Dorsolateral prefrontal cortex (tissue), 120 donors: ENCODE measurements at regions of chr15 and their contacts with region 1.

Region 1: GRCh38 chr15:75758071-75758872 is 45.6 kb upstream of the CSPG4 start:
- DNase-seq: peak; percentile 76 to 92 (median 88)
- H3K4me3 ChIP-seq: peak overlapping the region; percentile 48 to 88 (median 70)
- H3K27ac ChIP-seq: peak overlapping the region in 56 of 59 donors; percentile 5 to 92 (median 78)
- H3K27me3 ChIP-seq: no peaks in the 10 kb centered on the region
- CTCF ChIP-seq: peak in 40 of 56 donors; percentile 4 to 61 (median 42)

Region 2: DNA sequence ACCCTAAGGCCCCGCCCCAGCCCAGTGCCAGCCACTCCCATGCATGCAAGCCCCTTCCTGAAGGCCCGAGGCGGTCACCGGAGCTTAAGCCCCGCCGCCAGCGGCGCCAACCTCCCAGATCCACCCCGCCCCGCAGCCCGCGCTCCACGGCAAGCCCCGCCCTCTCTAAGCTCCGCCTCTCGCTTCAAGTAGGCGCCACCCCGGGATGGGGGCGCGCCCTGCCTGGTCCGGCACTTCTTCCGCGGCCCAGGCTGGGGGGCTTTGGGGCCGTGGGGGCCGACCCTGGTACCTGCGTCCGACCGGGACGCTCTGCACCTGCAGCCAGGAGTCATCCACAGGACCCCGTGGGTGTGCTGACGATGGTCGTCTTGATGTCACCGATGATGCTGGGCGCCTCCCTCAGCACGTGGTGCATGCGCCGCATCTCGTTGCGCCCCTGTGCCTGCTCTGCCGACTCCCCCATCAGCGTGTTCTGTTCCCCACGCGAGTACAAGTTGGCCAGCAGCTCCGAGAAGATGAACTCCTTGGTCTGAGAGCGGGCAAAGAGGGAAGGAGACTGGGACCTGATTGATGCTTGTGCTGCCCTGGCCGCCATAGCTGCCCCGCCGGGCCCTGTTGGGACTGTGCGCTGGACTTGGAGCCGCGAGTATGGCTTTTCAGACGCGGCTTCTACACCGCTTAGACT is 19.5 kb before region 1 on chr15:
- intact Hi-C with region 1: loop called in 1 of 2 experiments (anchors 2 kb)
- DNase-seq: peak; percentile 73 to 96 (median 92)
- H3K4me3 ChIP-seq: peak overlapping the region; percentile 58 to 99 (median 82)
- H3K27ac ChIP-seq: peak overlapping the region in 39 of 59 donors; percentile 23 to 87 (median 69)
- H3K27me3 ChIP-seq: no peaks in the 10 kb centered on the region
- CTCF ChIP-seq: peak in 7 of 56 donors; percentile 5 to 37 (median 16)